Activated T-helper 1 cell treated with anti-CD3 and anti-CD28 coated beads, Interleukin-12 subunit alpha, Interleukin-12 subunit beta, Interleukin-2, Interleukin-4 antibody, amounts not matched to agents 30 ng/mL and 10 ng/mL and 1 ng/mL, durations not matched to agents 14 hours and 24 hours and 36 hours (primary cell): ENCODE measurements at regions of chr6 and their contacts with region 1.

Region 1: GRCh38 chr6:137883400-137884148 is 16.5 kb downstream of the TNFAIP3 start:
- DNase-seq: no peak
- H3K4me3 Mint-ChIP-seq: peak overlapping the region; percentile 44
- H3K27ac Mint-ChIP-seq: peak overlapping the region; percentile 95
- H3K4me1 Mint-ChIP-seq: peaks cover 49% of the 10 kb centered on the region
- H3K27me3 Mint-ChIP-seq: no peaks in the 10 kb centered on the region

Region 2: DNA sequence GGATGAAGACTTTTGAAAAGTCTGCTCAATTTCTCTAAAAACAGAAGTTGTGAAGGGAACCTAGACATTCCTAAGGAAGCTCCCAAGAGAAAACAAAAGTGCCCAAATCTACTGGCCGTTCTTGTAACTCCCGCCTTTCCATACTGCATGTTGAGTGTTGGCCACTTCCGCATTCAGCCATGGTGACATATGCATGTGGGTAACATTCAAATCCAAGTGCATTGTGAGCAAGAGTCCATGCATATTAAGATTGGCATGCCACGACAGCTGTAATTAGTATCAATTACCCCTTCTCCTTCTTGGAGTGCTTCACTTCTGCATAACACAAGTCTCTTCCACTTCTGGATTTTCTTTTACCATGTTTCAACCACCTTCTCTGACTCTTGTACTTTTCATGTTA is 953.0 kb before region 1 on chr6:
- intact Hi-C with region 1: no loop called
- DNase-seq: no peak
- H3K4me3 Mint-ChIP-seq: no peak overlapping the region
- H3K27ac Mint-ChIP-seq: no peak overlapping the region
- H3K4me1 Mint-ChIP-seq: no peaks in the 10 kb centered on the region
- H3K27me3 Mint-ChIP-seq: peaks cover 28% of the 10 kb centered on the region

Region 3: GRCh38 chr6:137799950-137800568 is 83.5 kb before region 1 on chr6:
- intact Hi-C with region 1: no loop called
- DNase-seq: peak; percentile 35
- H3K4me3 Mint-ChIP-seq: no peak overlapping the region
- H3K27ac Mint-ChIP-seq: peak overlapping the region; percentile 14
- H3K4me1 Mint-ChIP-seq: peaks cover 67% of the 10 kb centered on the region
- H3K27me3 Mint-ChIP-seq: no peaks in the 10 kb centered on the region

Region 4: GRCh38 chr6:137903933-137904821 is 20.6 kb after region 1 on chr6:
- intact Hi-C with region 1: loop called (anchors 1 kb)
- DNase-seq: no peak
- H3K4me3 Mint-ChIP-seq: peak overlapping the region; percentile 19
- H3K27ac Mint-ChIP-seq: peak overlapping the region; percentile 97
- H3K4me1 Mint-ChIP-seq: peaks cover 59% of the 10 kb centered on the region
- H3K27me3 Mint-ChIP-seq: no peaks in the 10 kb centered on the region